ENCODE measurements at regions of chr12 and their contacts with region 1.

Region 1: GRCh38 chr12:16473610-16474326 is 126.3 kb downstream of the MGST1 start:
- DNase-seq: no peak
- H3K4me3 ChIP-seq: no peak overlapping the region
- H3K27ac ChIP-seq: no peak overlapping the region
- H3K4me1 ChIP-seq: no peaks in the 10 kb centered on the region
- H3K27me3 ChIP-seq: no peaks in the 10 kb centered on the region
- CTCF ChIP-seq: no peak

Region 2: GRCh38 chr12:18368594-18368993 is 1894.8 kb after region 1 on chr12:
- CTCF ChIA-PET with region 1: no interaction called
- POLR2A ChIA-PET with region 1: interaction called, 17 read pairs
- intact Hi-C with region 1: no loop called
- DNase-seq: no peak
- H3K4me3 ChIP-seq: no peak overlapping the region
- H3K27ac ChIP-seq: no peak overlapping the region
- H3K4me1 ChIP-seq: no peaks in the 10 kb centered on the region
- H3K27me3 ChIP-seq: no peaks in the 10 kb centered on the region
- CTCF ChIP-seq: no peak